Posterior vena cava (tissue), 2 donors: ENCODE measurements at regions of chr15 and their contacts with region 1.

Region 1: DNA sequence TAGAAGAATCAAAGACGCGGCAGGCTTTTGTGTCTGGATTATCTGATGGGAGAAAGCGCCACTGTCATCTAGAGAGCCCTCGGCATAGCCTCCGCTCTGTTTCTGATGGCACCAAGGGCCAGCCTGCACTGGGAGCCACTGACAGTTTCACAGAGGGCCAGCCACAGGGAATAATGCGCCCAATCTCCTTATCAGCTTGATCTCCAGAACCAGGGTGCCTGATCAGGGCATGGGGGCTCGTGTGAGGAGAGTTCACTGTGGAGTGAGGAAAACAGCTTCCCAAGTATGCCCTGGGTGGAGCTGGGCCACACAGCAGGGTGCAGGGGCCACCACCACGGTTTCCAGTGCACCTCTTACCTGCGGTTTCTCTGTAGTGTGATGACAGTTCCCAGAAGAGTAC is 29.8 kb upstream of the CLK3 start:
- DNase-seq: peak; percentile 34

Region 2: DNA sequence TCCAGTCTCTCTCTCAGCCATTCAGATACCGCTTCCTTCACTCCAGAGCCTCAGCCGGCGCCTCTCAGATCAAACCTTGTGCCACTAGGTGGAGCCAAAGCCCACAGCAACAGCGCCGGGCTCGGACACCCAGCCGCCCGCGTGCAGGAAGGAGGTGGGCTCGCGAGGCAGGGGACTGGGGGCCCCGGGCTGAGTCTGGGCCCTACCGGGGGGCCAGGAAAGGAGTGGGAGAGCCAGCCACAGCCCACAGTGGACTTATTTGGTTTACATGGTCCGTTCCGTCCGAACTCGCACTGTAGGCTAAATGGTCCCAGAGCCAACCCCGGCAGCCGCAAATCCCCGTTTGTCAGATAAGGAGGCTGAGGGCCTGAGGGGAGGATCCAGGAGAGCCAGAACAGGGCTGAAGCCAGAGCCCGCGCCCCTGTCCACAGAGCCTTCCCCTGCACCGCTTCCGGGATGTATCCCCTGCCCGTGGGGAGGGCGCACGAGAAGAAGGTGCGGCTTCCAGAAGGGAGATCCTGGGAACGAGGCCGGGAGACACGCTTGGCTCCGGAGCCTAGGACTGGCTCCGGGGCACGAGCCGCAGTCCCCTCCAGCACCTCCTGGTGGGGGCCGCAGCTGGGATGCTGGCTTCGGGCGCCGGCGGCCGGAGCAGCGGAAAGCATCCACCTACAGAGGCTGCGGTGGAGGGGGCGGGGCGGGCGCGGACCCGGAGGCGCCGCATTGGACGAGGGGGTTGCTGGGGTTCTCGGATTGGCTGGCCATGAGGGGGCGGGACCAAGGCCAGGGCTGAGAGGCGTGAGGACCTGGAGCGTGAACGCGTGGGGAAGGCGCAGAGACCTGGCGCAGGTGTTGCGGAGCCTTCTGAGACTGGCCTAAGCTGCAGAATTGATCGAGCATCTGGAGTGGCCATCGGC is 211.9 kb before region 1 on chr15:
- intact Hi-C with region 1: no loop called
- DNase-seq: peak; percentile 97

Region 3: GRCh38 chr15:74635228-74635627 is 49.4 kb after region 1 on chr15:
- intact Hi-C with region 1: no loop called
- DNase-seq: peak; percentile 86

Region 4: GRCh38 chr15:74648166-74648842 is 62.4 kb after region 1 on chr15:
- intact Hi-C with region 1: loop called in 1 of 2 experiments (anchors 2 kb)
- DNase-seq: no peak